ENCODE measurements at regions of chr13 and their contacts with region 1.

Region 1: GRCh38 chr13:39263033-39263432 is 224.8 kb downstream of the NHLRC3 start:
- DNase-seq: peak; percentile 9
- ATAC-seq: peak; percentile 89
- H3K4me3 ChIP-seq: no peak overlapping the region
- H3K27ac ChIP-seq: no peak overlapping the region
- H3K4me1 ChIP-seq: no peaks in the 10 kb centered on the region
- H3K27me3 ChIP-seq: no peaks in the 10 kb centered on the region
- CTCF ChIP-seq: peak; percentile 60 to 71 (median 70)
- EP300 ChIP-seq: no peak
- POLR2A ChIP-seq: no peak
- RAD21 ChIP-seq: peak; percentile 74

Region 2: DNA sequence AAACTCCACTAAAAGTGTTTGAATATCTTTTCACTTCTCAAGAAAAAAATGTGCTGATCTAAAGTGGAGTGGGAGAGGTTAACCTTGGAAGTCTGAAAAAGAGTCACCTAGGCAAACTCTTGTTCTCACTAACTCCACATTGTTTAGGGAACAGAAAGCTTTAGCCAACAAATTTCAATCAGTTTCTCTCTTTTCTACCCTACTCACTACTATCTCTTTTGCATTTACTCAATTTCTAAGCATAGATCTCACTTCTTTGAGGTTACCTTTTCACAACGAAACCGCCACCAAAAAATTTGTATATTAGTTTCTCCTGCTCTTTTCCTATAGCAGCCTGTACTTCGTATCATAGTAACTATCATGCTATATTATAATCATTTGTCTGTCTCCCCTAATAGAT is 218.5 kb before region 1 on chr13:
- CTCF ChIA-PET with region 1: interaction called, 5 read pairs
- POLR2A ChIA-PET with region 1: interaction called, 3 read pairs
- RAD21 ChIA-PET with region 1: interaction called, 4 read pairs
- SMC1A ChIA-PET with region 1: interaction called, 8 read pairs
- in situ Hi-C with region 1: loop called (anchors 5 kb)
- intact Hi-C with region 1: no loop called
- DNase-seq: no peak
- ATAC-seq: peak; percentile 79
- H3K4me3 ChIP-seq: peak overlapping the region; percentile 33; the same call in 1 of the 2 replicates
- H3K27ac ChIP-seq: peak overlapping the region; percentile 36; the same call in 1 of the 2 replicates
- H3K4me1 ChIP-seq: peaks cover 19% of the 10 kb centered on the region
- H3K27me3 ChIP-seq: no peaks in the 10 kb centered on the region
- CTCF ChIP-seq: no peak
- EP300 ChIP-seq: no peak
- POLR2A ChIP-seq: no peak
- RAD21 ChIP-seq: no peak

Region 3: DNA sequence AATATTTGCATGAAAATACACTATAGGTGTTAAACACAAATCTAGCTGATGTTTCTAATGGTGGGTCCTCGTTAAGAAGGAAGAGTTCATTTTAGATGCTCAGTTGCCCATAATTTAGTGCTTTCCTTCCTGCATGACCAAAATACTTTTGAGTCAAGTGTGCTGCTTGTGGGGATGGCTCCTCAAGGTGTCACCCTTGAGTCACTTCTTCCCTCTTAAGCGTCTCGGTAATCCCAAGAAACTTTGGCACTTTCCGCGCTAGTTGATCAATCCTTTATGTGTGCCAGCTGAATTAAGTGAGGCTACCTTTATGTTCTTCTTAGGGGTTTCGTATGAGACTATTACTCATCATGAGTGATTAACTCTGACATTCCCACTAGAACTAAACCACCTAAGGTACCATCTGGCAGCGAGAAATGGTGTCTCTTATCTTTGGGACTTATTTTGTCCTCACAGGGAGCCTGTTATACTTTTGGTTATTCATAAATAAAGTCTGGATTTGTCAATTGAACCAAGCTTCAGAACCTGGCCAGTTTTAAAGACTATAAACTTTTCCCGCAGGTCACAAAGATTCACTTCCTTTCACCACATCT is 118.0 kb before region 1 on chr13:
- CTCF ChIA-PET with region 1: interaction called, 119 read pairs
- POLR2A ChIA-PET with region 1: interaction called, 5 read pairs
- RAD21 ChIA-PET with region 1: interaction called, 58 read pairs
- SMC1A ChIA-PET with region 1: interaction called, 90 read pairs
- in situ Hi-C with region 1: no loop called
- intact Hi-C with region 1: loop called (anchors 1 kb)
- DNase-seq: no peak
- ATAC-seq: peak; percentile 80
- H3K4me3 ChIP-seq: no peak overlapping the region
- H3K27ac ChIP-seq: no peak overlapping the region
- H3K4me1 ChIP-seq: no peaks in the 10 kb centered on the region
- H3K27me3 ChIP-seq: no peaks in the 10 kb centered on the region
- CTCF ChIP-seq: peak; percentile 65 to 86 (median 69)
- EP300 ChIP-seq: no peak
- POLR2A ChIP-seq: no peak
- RAD21 ChIP-seq: peak; percentile 80

Region 4: GRCh38 chr13:39245688-39246087 is 17.3 kb before region 1 on chr13:
- CTCF ChIA-PET with region 1: interaction called, 4 read pairs
- POLR2A ChIA-PET with region 1: no interaction called
- RAD21 ChIA-PET with region 1: interaction called, 5 read pairs
- SMC1A ChIA-PET with region 1: interaction called, 13 read pairs
- in situ Hi-C with region 1: no loop called
- intact Hi-C with region 1: no loop called
- DNase-seq: no peak
- ATAC-seq: no peak
- H3K4me3 ChIP-seq: no peak overlapping the region
- H3K27ac ChIP-seq: no peak overlapping the region
- H3K4me1 ChIP-seq: no peaks in the 10 kb centered on the region
- H3K27me3 ChIP-seq: peaks cover 0 to 4% of the 10 kb centered on the region in 2 experiments; a peak in 1 of 4 replicates
- CTCF ChIP-seq: no peak
- EP300 ChIP-seq: no peak
- POLR2A ChIP-seq: no peak
- RAD21 ChIP-seq: no peak

Region 5: DNA sequence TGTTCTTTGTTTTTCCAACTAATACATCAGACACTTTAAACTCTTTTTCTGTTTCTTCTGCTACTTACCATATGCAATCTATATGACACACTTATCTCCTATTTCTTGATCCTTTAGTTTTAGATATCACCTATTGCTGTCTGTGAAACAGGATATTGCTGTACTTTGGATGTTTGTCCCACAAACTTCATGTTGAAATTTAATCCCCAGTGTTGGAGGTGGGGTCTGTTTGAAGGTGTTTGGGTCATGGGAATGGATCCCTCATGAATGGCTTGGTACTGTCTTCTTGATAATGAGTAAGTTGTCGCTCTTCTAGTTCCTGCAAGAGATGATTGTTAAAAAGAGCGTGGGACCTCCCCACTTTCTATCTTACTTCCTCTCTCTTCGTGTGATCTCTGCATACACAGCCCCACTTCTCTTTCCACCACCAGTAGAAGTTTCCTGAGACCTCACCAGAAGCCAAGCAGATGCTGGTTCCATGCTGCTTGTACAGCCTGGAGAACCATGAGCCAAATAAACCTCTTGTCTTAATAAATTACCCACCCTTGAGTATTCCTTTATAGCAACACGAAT is 19.5 kb after region 1 on chr13:
- CTCF ChIA-PET with region 1: interaction called, 3 read pairs
- POLR2A ChIA-PET with region 1: no interaction called
- RAD21 ChIA-PET with region 1: no interaction called
- SMC1A ChIA-PET with region 1: interaction called, 12 read pairs
- in situ Hi-C with region 1: no loop called
- intact Hi-C with region 1: no loop called
- DNase-seq: peak; percentile 21
- ATAC-seq: peak; percentile 90
- H3K4me3 ChIP-seq: no peak overlapping the region
- H3K27ac ChIP-seq: peak overlapping the region; percentile 29; the same call in 1 of the 2 replicates
- H3K4me1 ChIP-seq: no peaks in the 10 kb centered on the region; the same call in 1 of the 2 replicates
- H3K27me3 ChIP-seq: no peaks in the 10 kb centered on the region
- CTCF ChIP-seq: no peak
- EP300 ChIP-seq: no peak
- POLR2A ChIP-seq: no peak
- RAD21 ChIP-seq: no peak

Region 6: DNA sequence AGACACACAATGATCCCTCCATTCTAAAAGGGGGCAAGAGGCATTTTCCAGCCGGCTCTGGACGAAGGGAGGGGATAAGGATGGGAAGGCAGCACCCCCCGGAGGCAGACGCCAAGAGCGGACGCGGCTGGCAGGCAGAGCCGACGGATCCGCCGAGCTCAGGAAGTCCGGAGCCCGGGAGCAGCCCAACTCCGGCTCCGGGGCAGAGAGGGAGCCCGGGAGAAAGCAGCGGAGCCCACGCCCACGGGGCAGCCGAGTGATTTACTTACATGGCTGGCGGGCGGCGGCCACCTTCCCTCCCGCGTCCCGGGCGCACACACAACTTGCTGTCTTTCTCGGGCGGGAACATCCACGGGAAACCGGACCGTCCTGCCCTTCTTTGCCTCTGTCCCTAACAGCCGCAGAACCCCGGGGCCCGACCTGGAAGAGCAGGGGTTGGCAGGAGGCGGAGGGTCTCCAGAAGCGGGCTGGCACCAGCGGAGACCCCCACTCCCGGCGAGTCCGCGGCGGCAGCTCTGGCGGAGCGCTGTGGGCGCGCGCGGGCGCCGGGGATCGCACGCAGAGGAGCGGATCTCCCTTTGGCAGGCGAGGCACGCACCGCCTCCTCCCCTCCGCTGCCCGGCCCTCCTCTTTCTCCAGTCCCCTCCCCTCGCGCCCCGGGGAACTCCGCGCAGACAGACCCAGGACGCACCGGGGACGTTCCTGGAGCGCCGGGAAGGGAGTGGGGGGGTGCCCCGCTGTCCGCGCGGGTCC is 339.8 kb after region 1 on chr13 and contains the start of gene LHFPL6:
- CTCF ChIA-PET with region 1: interaction called, 4 read pairs
- POLR2A ChIA-PET with region 1: no interaction called
- RAD21 ChIA-PET with region 1: interaction called, 5 read pairs
- SMC1A ChIA-PET with region 1: interaction called, 6 read pairs
- in situ Hi-C with region 1: loop called (anchors 5 kb)
- intact Hi-C with region 1: no loop called
- DNase-seq: no peak
- ATAC-seq: peak; percentile 96
- H3K4me3 ChIP-seq: peak within 1 kb of the TSS; percentile 58
- H3K27ac ChIP-seq: no peak within 1 kb of the TSS
- H3K4me1 ChIP-seq: no peaks in the 10 kb centered on the region; the same call in 1 of the 2 replicates
- H3K27me3 ChIP-seq: peaks cover 0 to 5% of the 10 kb centered on the region in 2 experiments; a peak in 3 of 4 replicates
- CTCF ChIP-seq: peak; percentile 9 to 23 (median 11); a peak in 3 of 6 replicates
- EP300 ChIP-seq: no peak
- POLR2A ChIP-seq: peak; percentile 53
- RAD21 ChIP-seq: no peak
- polyA plus RNA-seq, gene LHFPL6: 0.11 to 0.20 TPM

Measured in GM12878 (cell line).